ENCODE measurements at regions of chr11 and their contacts with region 1.

Region 1: DNA sequence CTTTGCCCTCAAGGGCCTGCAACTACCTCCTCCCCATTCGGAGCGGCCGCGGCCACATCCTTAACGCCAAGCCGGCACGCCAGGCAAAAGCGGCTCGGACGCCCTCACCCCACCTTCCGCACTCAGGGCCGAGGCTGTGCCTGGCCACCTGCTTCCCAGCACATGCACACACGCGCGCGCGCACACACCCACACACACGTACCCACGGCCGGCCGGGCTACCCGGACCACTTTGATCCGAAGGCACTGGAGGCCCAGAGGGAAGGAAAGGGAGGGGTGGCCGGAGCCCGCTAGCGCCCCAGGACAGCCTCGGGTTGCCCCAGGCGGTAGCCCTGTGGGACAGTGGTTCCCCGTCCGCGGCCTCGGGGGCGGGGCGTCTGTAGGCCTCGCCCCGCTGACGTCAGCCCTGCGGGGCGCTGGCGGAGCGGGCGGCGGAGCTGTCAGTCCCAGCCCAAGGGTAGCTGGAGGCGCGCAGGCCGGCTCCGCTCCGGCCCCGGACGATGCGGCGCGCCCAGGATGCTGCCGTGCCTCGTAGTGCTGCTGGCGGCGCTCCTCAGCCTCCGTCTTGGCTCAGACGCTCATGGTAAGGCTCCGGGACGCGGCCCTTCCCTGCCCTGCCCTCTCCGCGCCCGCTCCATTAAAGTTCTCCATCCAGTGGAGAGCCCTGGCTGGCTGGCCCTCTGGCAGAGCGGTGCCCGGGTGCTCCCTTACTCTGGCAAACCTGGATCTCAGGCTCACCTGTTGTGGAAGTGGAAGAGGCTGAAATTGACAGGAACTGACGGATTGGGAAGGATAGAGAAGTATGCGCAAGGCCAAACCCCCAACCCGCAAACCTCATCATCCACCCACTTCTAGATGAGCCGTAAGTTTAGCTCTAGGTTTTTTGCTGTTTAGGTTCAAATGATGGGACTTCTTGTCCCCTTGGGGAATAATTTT is at the start of gene IL10RA:
- DNase-seq: peak; percentile 95
- ATAC-seq: peak; percentile 89
- H3K4me3 Mint-ChIP-seq: peak within 1 kb of the TSS; percentile 87
- H3K27ac Mint-ChIP-seq: peak within 1 kb of the TSS; percentile 83
- H3K4me1 Mint-ChIP-seq: peaks cover 56% of the 10 kb centered on the region
- H3K27me3 Mint-ChIP-seq: no peaks in the 10 kb centered on the region
- total RNA-seq, gene IL10RA: 304 TPM

Region 2: GRCh38 chr11:117946842-117947526 is 39.2 kb before region 1 on chr11:
- POLR2A ChIA-PET with region 1: interaction called, 608 read pairs
- DNase-seq: peak; percentile 89
- ATAC-seq: peak; percentile 24
- H3K4me3 Mint-ChIP-seq: peak overlapping the region; percentile 1
- H3K27ac Mint-ChIP-seq: peak overlapping the region; percentile 67
- H3K4me1 Mint-ChIP-seq: peaks cover 78% of the 10 kb centered on the region
- H3K27me3 Mint-ChIP-seq: no peaks in the 10 kb centered on the region

Region 3: GRCh38 chr11:117959438-117960149 is 26.6 kb before region 1 on chr11:
- POLR2A ChIA-PET with region 1: interaction called, 608 read pairs
- DNase-seq: no peak
- ATAC-seq: no peak
- H3K4me3 Mint-ChIP-seq: peak overlapping the region; percentile 78
- H3K27ac Mint-ChIP-seq: peak overlapping the region; percentile 92
- H3K4me1 Mint-ChIP-seq: peaks cover 37% of the 10 kb centered on the region
- H3K27me3 Mint-ChIP-seq: no peaks in the 10 kb centered on the region

Region 4: GRCh38 chr11:118002541-118003423 is 16.6 kb after region 1 on chr11:
- POLR2A ChIA-PET with region 1: interaction called, 303 read pairs
- DNase-seq: peak; percentile 70
- ATAC-seq: peak; percentile 41
- H3K4me3 Mint-ChIP-seq: peak overlapping the region; percentile 65
- H3K27ac Mint-ChIP-seq: peak overlapping the region; percentile 96
- H3K4me1 Mint-ChIP-seq: peaks cover 83% of the 10 kb centered on the region
- H3K27me3 Mint-ChIP-seq: no peaks in the 10 kb centered on the region

Region 5: GRCh38 chr11:118012083-118012669 is 26.0 kb after region 1 on chr11:
- POLR2A ChIA-PET with region 1: interaction called, 303 read pairs
- DNase-seq: peak; percentile 35
- ATAC-seq: no peak
- H3K4me3 Mint-ChIP-seq: peak overlapping the region; percentile 55
- H3K27ac Mint-ChIP-seq: peak overlapping the region; percentile 86
- H3K4me1 Mint-ChIP-seq: peaks cover 87% of the 10 kb centered on the region
- H3K27me3 Mint-ChIP-seq: no peaks in the 10 kb centered on the region

Region 6: GRCh38 chr11:118046051-118046963 is 60.1 kb after region 1 on chr11:
- POLR2A ChIA-PET with region 1: interaction called, 90 read pairs
- DNase-seq: no peak
- ATAC-seq: peak; percentile 61
- H3K4me3 Mint-ChIP-seq: peak overlapping the region; percentile 26
- H3K27ac Mint-ChIP-seq: peak overlapping the region; percentile 91
- H3K4me1 Mint-ChIP-seq: peaks cover 72% of the 10 kb centered on the region
- H3K27me3 Mint-ChIP-seq: no peaks in the 10 kb centered on the region

Region 7: DNA sequence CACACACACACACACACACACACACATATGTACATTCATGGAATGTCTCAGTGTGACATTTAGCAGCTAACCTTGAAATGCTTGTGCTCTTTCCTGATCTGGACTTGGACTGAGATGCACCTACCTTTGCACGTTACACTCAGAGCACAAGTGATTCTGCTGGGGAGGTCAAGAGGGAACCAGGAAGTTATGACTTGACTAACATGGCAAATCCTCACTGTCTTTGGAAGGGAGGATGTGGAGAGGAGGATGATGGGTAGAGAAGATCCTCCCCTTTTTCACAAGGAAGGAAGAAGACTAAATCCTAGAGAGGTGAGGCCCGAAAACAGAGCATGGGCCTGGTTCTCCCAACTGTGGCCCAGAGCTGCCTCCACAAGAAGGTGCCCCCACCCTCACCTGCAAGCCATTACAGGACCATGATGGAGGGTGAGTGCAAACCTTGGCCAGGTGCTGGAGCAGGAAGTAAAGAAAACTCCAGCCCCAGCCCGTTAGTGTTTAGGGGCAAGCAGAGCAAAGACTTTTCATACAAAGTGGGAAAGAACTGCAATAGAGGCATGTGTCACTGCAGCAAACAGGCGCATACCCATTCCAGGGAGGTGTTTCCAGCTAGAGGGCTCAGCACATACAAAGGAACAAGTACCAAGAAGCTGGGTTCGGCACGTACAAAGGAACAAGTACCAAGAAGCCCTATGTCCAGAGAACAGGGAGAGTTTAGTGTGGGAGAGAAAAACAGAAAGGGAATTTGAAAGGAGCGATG is 140.0 kb after region 1 on chr11:
- POLR2A ChIA-PET with region 1: no interaction called
- DNase-seq: no peak
- ATAC-seq: no peak
- H3K4me3 Mint-ChIP-seq: no peak overlapping the region
- H3K27ac Mint-ChIP-seq: peak overlapping the region; percentile 11
- H3K4me1 Mint-ChIP-seq: peaks cover 11% of the 10 kb centered on the region
- H3K27me3 Mint-ChIP-seq: peaks cover 13% of the 10 kb centered on the region